Caco-2 (cell line): ENCODE measurements at regions of chr19 and their contacts with region 1.

Region 1: DNA sequence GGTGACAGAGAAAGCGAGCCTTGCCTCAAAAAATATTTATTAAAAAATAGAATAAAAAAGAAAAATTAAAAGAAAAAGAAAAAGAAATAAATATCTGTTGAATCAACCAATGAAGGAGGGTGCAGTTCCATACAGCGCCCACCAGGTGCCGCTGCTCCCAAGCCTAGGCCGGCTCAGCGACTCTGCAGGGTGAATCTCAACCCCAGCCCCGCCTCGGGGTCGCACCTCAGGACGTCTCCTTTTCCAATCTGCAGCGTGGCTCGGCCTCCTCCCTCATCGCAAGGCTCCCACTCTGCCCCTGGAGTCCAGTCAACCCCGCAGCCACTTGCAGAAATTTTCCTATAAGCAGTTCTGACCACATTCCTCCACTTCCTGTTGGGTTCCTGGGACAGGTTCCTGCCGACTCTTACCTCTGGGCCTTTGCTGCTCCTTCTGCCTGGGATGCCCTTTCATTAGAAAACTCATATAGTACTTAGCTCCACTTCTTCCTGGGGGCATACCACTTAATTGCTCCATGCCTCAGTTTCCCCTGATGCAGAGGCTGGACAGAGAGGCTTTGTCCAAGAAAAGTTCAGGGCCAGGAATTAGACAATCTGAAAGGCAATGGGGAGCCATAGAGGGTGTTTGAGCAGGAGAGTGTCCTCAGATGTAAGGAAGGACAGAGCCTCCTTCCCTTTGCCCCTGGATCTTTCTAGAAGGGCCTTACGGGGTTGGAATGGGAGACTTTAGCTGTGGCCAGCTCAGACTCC is 24.3 kb downstream of the NFILZ start:
- DNase-seq: peak; percentile 55 to 58
- H3K4me3 ChIP-seq: no peak overlapping the region
- H3K4me3 Mint-ChIP-seq: peak overlapping the region; percentile 57
- H3K27ac Mint-ChIP-seq: no peak overlapping the region
- H3K4me1 ChIP-seq: no peaks in the 10 kb centered on the region
- H3K4me1 Mint-ChIP-seq: no peaks in the 10 kb centered on the region
- H3K27me3 ChIP-seq: no peaks in the 10 kb centered on the region
- H3K27me3 Mint-ChIP-seq: peaks cover 10% of the 10 kb centered on the region
- CTCF ChIP-seq: peak; percentile 89 to 94

Region 2: DNA sequence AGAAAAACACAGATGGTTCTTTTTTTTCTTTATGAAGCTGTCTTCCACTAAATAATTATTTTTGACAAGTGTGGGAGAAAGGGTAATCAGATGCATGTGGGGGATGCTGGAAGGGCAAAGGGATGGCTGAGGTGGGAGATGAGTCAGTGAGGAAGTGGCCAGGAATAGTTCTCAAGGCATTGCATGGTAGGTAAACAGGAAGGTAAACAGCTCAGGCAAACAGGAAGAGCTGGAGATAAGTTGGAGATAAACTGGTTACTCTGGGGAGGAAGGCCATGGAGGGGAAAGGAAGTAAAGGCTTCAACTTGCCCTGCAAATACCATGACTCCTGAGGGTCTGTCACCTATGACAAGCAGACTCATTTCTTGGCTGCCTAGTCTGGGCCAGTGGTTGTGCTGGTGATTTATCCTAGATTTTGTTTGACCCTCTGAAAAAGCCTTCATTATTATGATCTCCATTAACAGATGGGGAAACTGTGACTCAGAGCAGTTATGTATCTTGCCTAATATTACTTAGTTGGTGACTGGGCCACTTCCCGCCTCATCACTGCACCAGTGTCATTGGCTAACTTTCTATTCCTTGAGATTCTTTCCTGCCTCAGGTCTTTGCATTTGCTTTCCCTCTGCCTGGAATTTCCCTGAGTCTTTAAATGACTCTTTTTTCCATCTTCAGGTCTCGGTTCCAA is 26.7 kb after region 1 on chr19:
- CTCF ChIA-PET with region 1: no interaction called
- POLR2A ChIA-PET with region 1: no interaction called
- intact Hi-C with region 1: no loop called
- DNase-seq: no peak
- H3K4me3 ChIP-seq: no peak overlapping the region
- H3K4me3 Mint-ChIP-seq: no peak overlapping the region
- H3K27ac Mint-ChIP-seq: no peak overlapping the region
- H3K4me1 ChIP-seq: no peaks in the 10 kb centered on the region
- H3K4me1 Mint-ChIP-seq: no peaks in the 10 kb centered on the region
- H3K27me3 ChIP-seq: no peaks in the 10 kb centered on the region
- H3K27me3 Mint-ChIP-seq: peaks cover 9% of the 10 kb centered on the region
- CTCF ChIP-seq: no peak

Region 3: GRCh38 chr19:8697671-8698432 is 43.1 kb after region 1 on chr19:
- CTCF ChIA-PET with region 1: no interaction called
- POLR2A ChIA-PET with region 1: no interaction called
- intact Hi-C with region 1: loop called (anchors 1 kb)
- DNase-seq: no peak
- H3K4me3 ChIP-seq: no peak overlapping the region
- H3K4me3 Mint-ChIP-seq: no peak overlapping the region
- H3K27ac Mint-ChIP-seq: no peak overlapping the region
- H3K4me1 ChIP-seq: no peaks in the 10 kb centered on the region
- H3K4me1 Mint-ChIP-seq: no peaks in the 10 kb centered on the region
- H3K27me3 ChIP-seq: no peaks in the 10 kb centered on the region
- H3K27me3 Mint-ChIP-seq: no peaks in the 10 kb centered on the region
- CTCF ChIP-seq: no peak

Region 4: GRCh38 chr19:9075064-9075949 is 420.5 kb after region 1 on chr19:
- CTCF ChIA-PET with region 1: no interaction called
- POLR2A ChIA-PET with region 1: no interaction called
- intact Hi-C with region 1: loop called (anchors 5 kb)
- DNase-seq: no peak
- H3K4me3 ChIP-seq: no peak overlapping the region
- H3K4me3 Mint-ChIP-seq: no peak overlapping the region
- H3K27ac Mint-ChIP-seq: no peak overlapping the region
- H3K4me1 ChIP-seq: no peaks in the 10 kb centered on the region
- H3K4me1 Mint-ChIP-seq: no peaks in the 10 kb centered on the region
- H3K27me3 ChIP-seq: no peaks in the 10 kb centered on the region
- H3K27me3 Mint-ChIP-seq: no peaks in the 10 kb centered on the region
- CTCF ChIP-seq: no peak